Lower lobe of right lung (tissue), 2 donors: ENCODE measurements at regions of chr10 and their contacts with region 1.

Region 1: DNA sequence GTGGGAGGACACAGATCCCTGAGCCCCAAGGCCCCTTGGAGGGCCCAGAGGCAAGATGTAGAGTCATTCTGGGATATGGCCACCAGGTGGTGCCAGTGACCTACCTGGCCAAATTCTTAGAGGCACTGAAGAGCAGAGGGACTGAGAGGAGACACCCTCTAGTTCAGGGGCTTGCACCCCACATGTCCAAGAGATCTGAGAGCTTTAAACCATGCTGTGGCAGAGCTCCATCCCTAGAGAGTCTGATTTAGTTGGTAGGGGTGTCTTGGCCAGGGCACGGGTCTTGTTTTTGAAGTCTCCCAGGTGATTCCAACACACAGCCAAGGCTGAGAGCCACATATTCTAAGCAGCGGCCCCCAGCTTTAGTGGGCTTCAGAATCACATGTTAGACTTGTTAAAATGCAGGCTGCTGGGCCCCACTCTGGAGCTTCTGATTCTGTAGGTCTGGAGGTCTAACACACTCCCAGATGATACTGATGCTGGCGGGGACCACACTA is 52.5 kb downstream of the PRF1 start:
- DNase-seq: peak; percentile 66
- ATAC-seq: peak; percentile 74 to 76
- H3K4me3 ChIP-seq: no peak overlapping the region
- H3K27ac ChIP-seq: no peak overlapping the region
- H3K4me1 ChIP-seq: peaks cover 14% of the 10 kb centered on the region
- H3K27me3 ChIP-seq: no peaks in the 10 kb centered on the region
- CTCF ChIP-seq: peak; percentile 92

Region 2: GRCh38 chr10:70693619-70694335 is 143.8 kb after region 1 on chr10:
- intact Hi-C with region 1: no loop called
- DNase-seq: no peak
- ATAC-seq: no peak
- H3K4me3 ChIP-seq: no peak overlapping the region
- H3K27ac ChIP-seq: no peak overlapping the region
- H3K4me1 ChIP-seq: no peaks in the 10 kb centered on the region
- H3K27me3 ChIP-seq: no peaks in the 10 kb centered on the region
- CTCF ChIP-seq: no peak

Region 3: DNA sequence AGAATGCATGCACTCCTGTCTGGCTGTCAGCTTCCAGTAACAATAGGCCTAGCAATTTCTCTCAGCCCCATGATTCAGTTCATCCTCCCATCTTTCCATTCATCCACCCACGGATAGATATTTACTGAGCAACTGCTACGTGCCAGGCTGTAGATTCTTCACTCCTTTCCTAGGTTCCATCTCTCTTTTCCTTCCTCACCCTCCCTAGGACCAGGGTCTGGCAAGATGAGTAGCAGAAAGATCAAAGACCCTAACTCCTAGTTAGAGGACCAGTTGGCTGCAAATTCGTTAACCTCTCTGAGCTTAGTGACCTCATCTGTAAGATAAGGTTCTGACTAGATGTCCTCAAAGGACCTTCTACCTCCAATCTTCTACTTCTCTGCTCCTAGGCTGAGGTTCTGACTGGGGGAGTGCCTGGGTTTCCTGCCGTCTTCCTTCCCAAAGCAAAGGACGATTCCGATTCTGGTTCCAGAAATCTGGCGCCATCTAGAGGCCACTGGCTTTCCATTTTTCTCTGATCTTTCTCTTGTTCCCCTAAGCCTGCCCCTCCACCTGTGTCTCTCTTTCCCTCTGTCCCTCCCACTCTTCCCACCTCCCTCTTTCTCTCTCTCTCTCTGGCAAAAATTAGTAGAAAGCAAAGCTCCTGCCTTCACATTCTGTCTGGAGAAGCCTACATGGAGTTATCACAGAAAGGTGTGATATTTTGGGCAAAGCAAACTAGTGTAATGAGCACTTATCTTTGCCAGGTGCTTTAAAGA is 208.9 kb after region 1 on chr10:
- intact Hi-C with region 1: loop called (anchors 5 kb)
- DNase-seq: peak; percentile 46
- ATAC-seq: peak; percentile 45 to 76
- H3K4me3 ChIP-seq: no peak overlapping the region
- H3K27ac ChIP-seq: no peak overlapping the region
- H3K4me1 ChIP-seq: peaks cover 5% of the 10 kb centered on the region
- H3K27me3 ChIP-seq: no peaks in the 10 kb centered on the region
- CTCF ChIP-seq: peak; percentile 77